Activated CD8-positive, alpha-beta T cell treated with anti-CD3 and anti-CD28 coated beads for 36 hours (primary cell): ENCODE measurements at regions of chr5 and their contacts with region 1.

Region 1: DNA sequence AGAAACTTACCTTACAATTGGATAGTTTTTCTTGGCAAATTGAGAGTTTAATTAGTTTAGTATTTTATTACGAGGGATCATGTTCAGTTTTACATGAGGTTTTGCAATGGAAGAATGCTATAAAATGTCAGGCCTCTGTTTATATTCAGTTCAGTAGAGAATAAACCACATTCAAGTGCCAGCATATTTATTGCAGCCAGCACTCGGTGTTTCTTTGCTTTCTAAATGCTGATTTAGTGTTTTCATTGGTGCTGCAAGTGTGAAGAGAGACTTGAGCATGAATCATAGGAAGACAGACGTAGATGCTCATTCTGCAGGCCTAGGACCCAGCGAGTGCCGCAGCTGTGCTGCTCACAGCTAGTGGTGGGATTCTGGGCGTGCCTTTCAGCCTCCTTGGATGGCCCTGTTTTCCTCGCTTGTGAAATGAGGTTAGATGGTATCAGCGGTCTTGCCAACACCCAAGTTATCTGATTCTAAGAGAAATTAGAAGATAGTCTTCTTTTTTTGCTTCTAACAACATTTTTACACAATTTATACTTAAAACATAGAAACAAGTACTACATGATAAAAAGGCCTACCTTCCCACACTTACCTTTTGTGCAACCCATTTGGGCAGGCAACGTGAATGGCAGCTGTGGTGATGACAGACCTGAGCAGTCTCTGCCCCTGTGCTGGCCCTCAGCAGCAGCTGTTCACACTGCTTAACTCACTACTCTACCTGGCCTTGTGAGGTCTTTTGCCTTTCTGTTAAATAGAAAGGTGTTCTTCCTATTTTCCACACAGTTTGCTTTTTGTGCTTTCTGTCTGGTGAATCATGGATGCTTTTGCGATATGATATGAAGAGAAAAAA is 26.8 kb upstream of the TNFAIP8 start:
- DNase-seq: peak; percentile 80
- ATAC-seq: peak; percentile 73
- H3K4me3 Mint-ChIP-seq: peak overlapping the region; percentile 43
- H3K27ac Mint-ChIP-seq: peak overlapping the region; percentile 95
- H3K4me1 Mint-ChIP-seq: peaks cover 92% of the 10 kb centered on the region
- H3K27me3 Mint-ChIP-seq: no peaks in the 10 kb centered on the region
- CTCF ChIP-seq: no peak

Region 2: GRCh38 chr5:119274767-119275130 is 54.2 kb before region 1 on chr5:
- CTCF ChIA-PET with region 1: no interaction called
- POLR2A ChIA-PET with region 1: interaction called, 16 read pairs
- intact Hi-C with region 1: loop called (anchors 5 kb)
- DNase-seq: no peak
- ATAC-seq: peak; percentile 67
- H3K4me3 Mint-ChIP-seq: peak overlapping the region; percentile 95
- H3K27ac Mint-ChIP-seq: peak overlapping the region; percentile 92
- H3K4me1 Mint-ChIP-seq: peaks cover 87% of the 10 kb centered on the region
- H3K27me3 Mint-ChIP-seq: no peaks in the 10 kb centered on the region
- CTCF ChIP-seq: no peak

Region 3: GRCh38 chr5:119315516-119315949 is 13.4 kb before region 1 on chr5:
- CTCF ChIA-PET with region 1: interaction called, 42 read pairs
- POLR2A ChIA-PET with region 1: interaction called, 8 read pairs
- intact Hi-C with region 1: no loop called
- DNase-seq: peak; percentile 84
- ATAC-seq: peak; percentile 79
- H3K4me3 Mint-ChIP-seq: peak overlapping the region; percentile 38
- H3K27ac Mint-ChIP-seq: peak overlapping the region; percentile 81
- H3K4me1 Mint-ChIP-seq: peaks cover 93% of the 10 kb centered on the region
- H3K27me3 Mint-ChIP-seq: no peaks in the 10 kb centered on the region
- CTCF ChIP-seq: peak; percentile 70

Region 4: GRCh38 chr5:119355685-119356611 is 27.0 kb after region 1 on chr5 and contains the start of gene TNFAIP8:
- CTCF ChIA-PET with region 1: interaction called, 32 read pairs
- POLR2A ChIA-PET with region 1: interaction called, 163 read pairs
- intact Hi-C with region 1: no loop called
- DNase-seq: peak; percentile 85
- ATAC-seq: peak; percentile 63
- H3K4me3 Mint-ChIP-seq: peak within 1 kb of the TSS; percentile 98
- H3K27ac Mint-ChIP-seq: peak within 1 kb of the TSS; percentile 97
- H3K4me1 Mint-ChIP-seq: peaks cover 62% of the 10 kb centered on the region
- H3K27me3 Mint-ChIP-seq: no peaks in the 10 kb centered on the region
- CTCF ChIP-seq: no peak
- total RNA-seq, gene TNFAIP8: 135 to 141 TPM

Region 5: GRCh38 chr5:119743927-119744326 is 414.9 kb after region 1 on chr5:
- CTCF ChIA-PET with region 1: no interaction called
- POLR2A ChIA-PET with region 1: no interaction called
- intact Hi-C with region 1: no loop called
- DNase-seq: peak; percentile 16
- ATAC-seq: peak; percentile 55
- H3K4me3 Mint-ChIP-seq: no peak overlapping the region
- H3K27ac Mint-ChIP-seq: no peak overlapping the region
- H3K4me1 Mint-ChIP-seq: no peaks in the 10 kb centered on the region
- H3K27me3 Mint-ChIP-seq: peaks cover 1% of the 10 kb centered on the region
- CTCF ChIP-seq: peak; percentile 64